Activated CD4-positive, alpha-beta T cell treated with anti-CD3 and anti-CD28 coated beads for 36 hours (primary cell): ENCODE measurements at regions of chr6 and their contacts with region 1.

Region 1: GRCh38 chr6:30998785-30999184 is 11.5 kb upstream of the MUC22 start:
- DNase-seq: no peak
- ATAC-seq: no peak
- H3K4me3 Mint-ChIP-seq: no peak overlapping the region
- H3K27ac Mint-ChIP-seq: no peak overlapping the region
- H3K4me1 Mint-ChIP-seq: no peaks in the 10 kb centered on the region
- H3K27me3 Mint-ChIP-seq: no peaks in the 10 kb centered on the region

Region 2: DNA sequence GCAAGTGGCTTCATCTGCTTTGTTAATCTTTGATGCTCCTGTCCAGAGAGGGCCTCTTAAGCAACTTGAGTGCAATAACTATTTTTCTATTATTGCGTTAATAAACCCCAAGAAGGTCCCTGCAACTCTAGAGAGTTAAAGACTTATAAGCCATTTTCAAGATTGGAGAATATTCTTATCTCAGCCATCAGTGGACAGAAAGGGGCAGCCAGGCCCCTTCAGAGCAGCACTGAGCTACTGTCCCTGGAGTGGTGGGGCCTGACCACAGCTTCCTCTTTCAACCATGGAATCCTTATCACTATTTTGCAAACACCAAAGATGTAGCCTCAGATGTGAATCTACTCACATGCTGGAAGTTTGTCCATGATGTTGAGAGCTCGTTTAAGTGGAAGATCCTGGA is 1508.2 kb before region 1 on chr6:
- CTCF ChIA-PET with region 1: no interaction called
- POLR2A ChIA-PET with region 1: no interaction called
- intact Hi-C with region 1: no loop called
- DNase-seq: no peak
- ATAC-seq: no peak
- H3K4me3 Mint-ChIP-seq: no peak overlapping the region
- H3K27ac Mint-ChIP-seq: no peak overlapping the region
- H3K4me1 Mint-ChIP-seq: no peaks in the 10 kb centered on the region
- H3K27me3 Mint-ChIP-seq: peaks cover 18% of the 10 kb centered on the region

Region 3: DNA sequence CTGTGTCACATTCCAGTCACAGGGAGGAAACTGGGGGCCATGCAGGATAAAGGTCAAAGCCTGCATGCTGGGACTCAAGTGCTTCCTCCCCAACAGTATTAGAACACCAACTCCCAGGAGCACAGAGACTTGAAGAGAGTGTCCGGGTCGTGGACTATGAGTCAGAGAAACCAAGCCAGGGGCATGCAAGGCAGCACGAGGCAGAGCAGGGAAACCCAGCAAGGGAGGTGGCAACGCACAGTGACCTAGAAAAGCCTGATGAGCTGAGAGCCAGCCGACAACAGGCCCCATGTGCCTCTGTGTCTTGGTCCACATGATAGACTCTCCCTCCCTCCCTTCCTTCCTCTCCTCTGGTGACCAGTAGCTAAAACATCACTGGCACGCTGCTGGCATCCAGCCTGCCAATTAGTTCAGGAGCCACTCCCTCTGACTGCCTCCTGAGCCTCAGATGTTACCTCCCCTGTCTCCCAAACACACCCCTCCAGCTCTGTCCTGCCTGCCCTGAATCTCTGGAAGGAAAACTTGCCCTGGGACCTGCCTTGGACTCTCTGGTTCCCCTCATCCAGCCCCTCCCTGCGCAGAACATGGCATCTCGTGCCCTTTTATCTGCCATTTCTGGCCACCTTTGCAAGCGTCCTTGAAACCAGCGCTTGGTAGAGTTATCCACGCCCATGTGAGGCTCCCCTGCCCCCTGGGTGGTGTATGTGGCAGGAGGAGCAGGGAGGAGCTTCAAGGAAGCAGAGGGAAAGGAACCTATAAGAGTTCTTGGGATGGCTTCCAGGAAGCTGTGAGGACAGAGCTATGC is 907.0 kb before region 1 on chr6:
- CTCF ChIA-PET with region 1: no interaction called
- POLR2A ChIA-PET with region 1: no interaction called
- intact Hi-C with region 1: no loop called
- DNase-seq: no peak
- ATAC-seq: no peak
- H3K4me3 Mint-ChIP-seq: no peak overlapping the region
- H3K27ac Mint-ChIP-seq: no peak overlapping the region
- H3K4me1 Mint-ChIP-seq: no peaks in the 10 kb centered on the region
- H3K27me3 Mint-ChIP-seq: peaks cover 50% of the 10 kb centered on the region

Region 4: GRCh38 chr6:30963641-30964040 is 35.1 kb before region 1 on chr6:
- CTCF ChIA-PET with region 1: no interaction called
- POLR2A ChIA-PET with region 1: no interaction called
- intact Hi-C with region 1: loop called in 1 of 2 experiments (anchors 2 kb)
- DNase-seq: no peak
- ATAC-seq: no peak
- H3K4me3 Mint-ChIP-seq: no peak overlapping the region
- H3K27ac Mint-ChIP-seq: no peak overlapping the region
- H3K4me1 Mint-ChIP-seq: no peaks in the 10 kb centered on the region
- H3K27me3 Mint-ChIP-seq: peaks cover 17% of the 10 kb centered on the region

Region 5: GRCh38 chr6:31396422-31397152 is 397.8 kb after region 1 on chr6:
- CTCF ChIA-PET with region 1: no interaction called
- POLR2A ChIA-PET with region 1: no interaction called
- intact Hi-C with region 1: no loop called
- DNase-seq: peak; percentile 92
- ATAC-seq: peak; percentile 64
- H3K4me3 Mint-ChIP-seq: no peak overlapping the region
- H3K27ac Mint-ChIP-seq: no peak overlapping the region
- H3K4me1 Mint-ChIP-seq: peaks cover 20% of the 10 kb centered on the region
- H3K27me3 Mint-ChIP-seq: no peaks in the 10 kb centered on the region